Activated naive CD4-positive, alpha-beta T cell treated with anti-CD3 and anti-CD28 coated beads for 36 hours (primary cell): ENCODE measurements at regions of chr18 and their contacts with region 1.

Region 1: DNA sequence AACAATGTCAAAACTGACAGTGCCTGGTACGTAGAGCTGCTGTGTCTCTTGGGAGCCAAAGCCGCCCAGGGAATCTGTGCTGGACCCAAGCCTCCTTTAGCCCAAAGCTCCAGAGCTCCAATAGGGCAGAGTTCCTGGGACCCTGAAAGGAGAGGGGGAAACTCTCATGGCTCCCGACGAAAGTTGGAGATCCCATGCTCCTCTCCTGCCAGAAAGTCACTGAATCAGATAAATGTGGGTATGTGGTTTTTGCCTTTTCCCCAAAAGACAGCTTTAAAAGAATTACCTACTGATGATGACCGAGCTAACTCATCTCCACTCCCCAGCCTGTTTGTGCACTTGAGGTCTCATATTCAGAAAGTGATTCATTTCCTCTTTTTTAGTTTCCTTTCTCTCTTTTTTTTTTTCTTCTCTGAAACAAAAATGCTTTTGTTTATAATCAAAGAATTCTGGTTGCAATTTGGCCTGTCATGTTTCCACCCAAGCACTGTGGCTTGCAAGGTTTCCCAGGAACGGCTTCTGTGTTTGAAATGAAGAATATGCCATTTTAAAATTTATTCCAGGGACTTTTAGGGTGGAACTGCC is 14.1 kb upstream of the PMAIP1 start:
- DNase-seq: peak; percentile 59
- H3K4me3 Mint-ChIP-seq: peak overlapping the region; percentile 26
- H3K27ac Mint-ChIP-seq: peak overlapping the region; percentile 68
- H3K4me1 Mint-ChIP-seq: peaks cover 37% of the 10 kb centered on the region
- H3K27me3 Mint-ChIP-seq: no peaks in the 10 kb centered on the region

Region 2: DNA sequence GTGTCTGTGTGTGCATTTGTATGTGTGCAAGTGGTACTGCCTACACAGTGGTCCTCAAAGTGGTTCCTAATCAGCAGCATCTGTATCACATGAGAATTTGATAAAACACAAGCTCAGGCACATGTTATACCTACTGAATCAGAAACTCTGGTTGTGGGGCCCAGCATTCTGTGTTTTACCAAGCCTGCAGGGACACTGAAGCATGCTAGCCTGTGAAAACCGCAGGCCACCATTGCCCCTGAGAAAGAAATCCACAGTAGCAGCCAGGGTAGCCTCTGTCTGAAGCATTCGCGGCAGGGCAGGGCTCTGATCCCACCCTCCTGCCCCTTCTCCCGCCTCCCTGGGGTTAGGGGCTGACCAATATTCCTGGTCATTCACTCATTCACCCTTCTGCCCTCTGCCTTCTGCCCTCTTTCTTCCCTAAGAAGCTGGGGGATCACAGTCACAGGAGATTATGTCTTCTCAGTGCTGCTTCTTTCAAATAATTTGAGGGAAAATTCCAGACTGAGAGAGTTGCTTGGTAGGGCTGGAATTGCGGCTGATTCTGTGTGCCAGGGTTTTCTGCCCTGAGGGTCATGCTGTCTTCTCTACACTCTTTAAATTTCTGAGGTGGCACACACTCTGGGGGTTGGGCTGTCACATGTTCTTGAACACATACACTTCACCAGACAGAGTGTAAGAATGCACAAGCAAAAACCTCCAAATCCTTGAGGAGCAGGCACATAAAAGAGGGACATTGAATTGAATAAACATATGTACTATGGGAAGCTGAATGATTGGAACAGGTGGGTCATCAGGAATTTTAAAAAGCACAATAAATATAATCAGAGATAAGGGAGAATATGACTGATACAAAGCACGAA is 872.6 kb before region 1 on chr18:
- CTCF ChIA-PET with region 1: no interaction called
- intact Hi-C with region 1: no loop called
- DNase-seq: no peak
- H3K4me3 Mint-ChIP-seq: no peak overlapping the region
- H3K27ac Mint-ChIP-seq: no peak overlapping the region
- H3K4me1 Mint-ChIP-seq: no peaks in the 10 kb centered on the region
- H3K27me3 Mint-ChIP-seq: peaks cover 8% of the 10 kb centered on the region

Region 3: DNA sequence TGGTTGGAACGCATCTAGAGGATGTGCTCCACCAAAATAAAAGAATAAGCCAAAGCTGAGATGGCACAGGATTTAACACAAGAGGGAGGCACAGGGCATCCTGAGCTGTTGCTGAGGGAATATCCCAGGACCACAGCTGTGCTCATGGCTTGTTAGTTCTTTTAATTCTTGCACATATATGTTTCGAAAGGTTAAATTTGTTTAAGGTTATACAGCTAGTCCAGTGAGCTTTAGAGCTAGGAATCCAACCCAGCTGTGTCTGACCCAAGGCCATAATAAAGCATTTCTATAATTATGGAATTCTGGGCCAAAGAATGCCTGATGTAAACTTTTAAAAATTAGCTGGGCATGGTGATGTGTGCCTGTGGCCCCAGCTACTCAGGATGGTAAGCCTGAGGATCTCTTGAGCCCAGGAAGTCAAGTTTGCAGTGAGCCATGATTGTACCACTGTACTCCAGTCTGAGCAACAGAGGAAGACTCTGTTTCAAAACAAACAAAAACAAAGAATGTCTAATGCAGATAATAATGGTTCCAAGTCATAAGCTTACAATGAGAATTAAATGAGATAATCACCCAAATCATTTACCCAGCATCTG is 122.0 kb before region 1 on chr18:
- CTCF ChIA-PET with region 1: no interaction called
- intact Hi-C with region 1: no loop called
- DNase-seq: no peak
- H3K4me3 Mint-ChIP-seq: no peak overlapping the region
- H3K27ac Mint-ChIP-seq: no peak overlapping the region
- H3K4me1 Mint-ChIP-seq: no peaks in the 10 kb centered on the region
- H3K27me3 Mint-ChIP-seq: peaks cover 6% of the 10 kb centered on the region

Region 4: DNA sequence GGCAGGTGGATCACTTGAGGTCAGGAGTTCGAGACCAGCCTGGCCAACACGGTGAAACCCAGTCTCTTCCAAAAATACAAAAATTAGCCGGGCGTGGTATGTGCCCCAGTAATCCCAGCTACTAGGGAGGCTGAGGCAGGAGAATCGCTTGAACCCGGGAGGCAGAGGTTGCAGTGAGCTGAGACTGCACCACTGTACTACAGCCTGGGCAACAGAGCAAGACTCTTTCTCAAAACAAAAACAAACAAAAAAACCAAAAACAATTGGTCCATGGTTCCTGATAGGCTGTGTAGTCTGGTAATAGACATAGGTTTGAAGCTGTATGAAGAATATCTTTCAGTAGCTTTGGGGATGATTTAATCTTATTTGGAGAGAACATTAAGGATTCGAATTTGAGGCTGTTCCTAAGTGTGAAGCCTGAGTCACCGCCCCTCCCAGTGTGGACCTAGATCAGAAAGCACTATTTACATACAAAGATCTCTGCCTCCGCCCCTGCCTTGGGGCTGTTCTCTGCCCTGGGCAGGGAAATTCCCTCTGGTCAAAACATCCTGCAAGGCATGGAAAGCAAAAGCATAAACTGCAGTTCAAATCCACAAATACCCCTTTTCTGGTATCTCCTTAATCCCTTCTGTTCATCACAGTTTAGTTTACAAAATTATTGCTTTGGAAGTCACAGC is 38.7 kb before region 1 on chr18:
- CTCF ChIA-PET with region 1: interaction called, 3 read pairs
- intact Hi-C with region 1: loop called (anchors 1 kb)
- DNase-seq: peak; percentile 83
- H3K4me3 Mint-ChIP-seq: no peak overlapping the region
- H3K27ac Mint-ChIP-seq: peak overlapping the region; percentile 1
- H3K4me1 Mint-ChIP-seq: peaks cover 16% of the 10 kb centered on the region
- H3K27me3 Mint-ChIP-seq: no peaks in the 10 kb centered on the region

Region 5: GRCh38 chr18:59907172-59907571 is 21.5 kb after region 1 on chr18:
- CTCF ChIA-PET with region 1: interaction called, 10 read pairs
- intact Hi-C with region 1: loop called (anchors 1 kb)
- DNase-seq: peak; percentile 36
- H3K4me3 Mint-ChIP-seq: peak overlapping the region; percentile 7
- H3K27ac Mint-ChIP-seq: peak overlapping the region; percentile 80
- H3K4me1 Mint-ChIP-seq: peaks cover 62% of the 10 kb centered on the region
- H3K27me3 Mint-ChIP-seq: no peaks in the 10 kb centered on the region

Region 6: GRCh38 chr18:59927246-59927825 is 41.7 kb after region 1 on chr18:
- CTCF ChIA-PET with region 1: interaction called, 3 read pairs
- intact Hi-C with region 1: loop called (anchors 1 kb)
- DNase-seq: peak; percentile 77
- H3K4me3 Mint-ChIP-seq: no peak overlapping the region
- H3K27ac Mint-ChIP-seq: peak overlapping the region; percentile 83
- H3K4me1 Mint-ChIP-seq: peaks cover 32% of the 10 kb centered on the region
- H3K27me3 Mint-ChIP-seq: peaks cover 6% of the 10 kb centered on the region

Region 7: GRCh38 chr18:59950215-59950944 is 64.7 kb after region 1 on chr18:
- CTCF ChIA-PET with region 1: no interaction called
- intact Hi-C with region 1: loop called (anchors 1 kb)
- DNase-seq: peak; percentile 18
- H3K4me3 Mint-ChIP-seq: no peak overlapping the region
- H3K27ac Mint-ChIP-seq: no peak overlapping the region
- H3K4me1 Mint-ChIP-seq: peaks cover 20% of the 10 kb centered on the region
- H3K27me3 Mint-ChIP-seq: no peaks in the 10 kb centered on the region